CD4-positive, alpha-beta T cell (primary cell): ENCODE measurements at regions of chr2 and their contacts with region 1.

Region 1: DNA sequence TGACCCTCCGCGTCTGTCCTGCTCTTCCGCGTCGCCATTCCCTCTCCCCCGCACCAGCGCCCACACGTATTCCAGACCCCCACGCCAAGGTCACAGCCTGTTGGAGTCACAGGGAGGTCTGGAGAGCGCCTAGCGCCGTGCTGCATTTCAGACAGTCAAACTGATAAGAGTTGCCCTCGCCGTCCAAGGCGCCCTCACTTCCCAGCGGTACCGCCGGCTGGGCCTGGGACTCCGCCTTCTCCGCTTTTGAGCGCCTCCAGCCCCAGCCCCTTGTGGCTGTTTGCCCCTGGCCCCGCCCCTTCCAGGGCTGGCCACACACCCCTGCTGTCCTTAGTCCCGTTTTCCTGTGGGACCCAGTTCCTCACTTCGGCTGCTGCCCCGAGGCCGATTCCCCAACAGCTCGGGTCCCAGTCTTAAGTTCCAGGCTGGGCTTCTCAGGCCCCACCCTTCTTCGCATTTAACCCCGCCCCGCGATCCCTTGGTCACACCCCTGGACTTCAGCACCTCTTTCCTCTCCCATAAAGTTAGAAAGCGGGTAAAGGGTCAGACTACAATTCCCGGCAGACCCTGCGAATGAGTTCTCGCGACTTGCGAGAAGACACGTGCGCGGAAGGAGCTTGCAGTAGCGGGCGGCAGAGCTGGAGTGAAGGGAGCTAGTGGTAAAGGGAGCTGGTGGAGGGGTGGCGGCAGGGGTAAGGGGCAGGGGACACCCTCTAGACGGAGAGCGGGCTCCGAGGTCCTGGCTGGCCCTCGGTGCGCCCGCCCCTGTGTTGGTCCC is at the start of gene GMPPA:
- DNase-seq: peak; percentile 82 to 97 (median 88)
- ATAC-seq: peak; percentile 94
- H3K4me3 ChIP-seq: peak within 1 kb of the TSS; percentile 91
- H3K4me3 Mint-ChIP-seq: peak within 1 kb of the TSS; percentile 93
- H3K27ac ChIP-seq: peak within 1 kb of the TSS in 1 of 2 donors; percentile 45
- H3K27ac Mint-ChIP-seq: peak within 1 kb of the TSS; percentile 63
- H3K4me1 ChIP-seq: peaks cover 44% of the 10 kb centered on the region
- H3K4me1 Mint-ChIP-seq: peaks cover 37% of the 10 kb centered on the region
- H3K27me3 ChIP-seq: peaks cover 40 to 43% of the 10 kb centered on the region in 2 experiments
- H3K27me3 Mint-ChIP-seq: peaks cover 49% of the 10 kb centered on the region
- CTCF ChIP-seq: no peak
- total RNA-seq, gene GMPPA: 13.3 to 14.4 TPM

Region 2: DNA sequence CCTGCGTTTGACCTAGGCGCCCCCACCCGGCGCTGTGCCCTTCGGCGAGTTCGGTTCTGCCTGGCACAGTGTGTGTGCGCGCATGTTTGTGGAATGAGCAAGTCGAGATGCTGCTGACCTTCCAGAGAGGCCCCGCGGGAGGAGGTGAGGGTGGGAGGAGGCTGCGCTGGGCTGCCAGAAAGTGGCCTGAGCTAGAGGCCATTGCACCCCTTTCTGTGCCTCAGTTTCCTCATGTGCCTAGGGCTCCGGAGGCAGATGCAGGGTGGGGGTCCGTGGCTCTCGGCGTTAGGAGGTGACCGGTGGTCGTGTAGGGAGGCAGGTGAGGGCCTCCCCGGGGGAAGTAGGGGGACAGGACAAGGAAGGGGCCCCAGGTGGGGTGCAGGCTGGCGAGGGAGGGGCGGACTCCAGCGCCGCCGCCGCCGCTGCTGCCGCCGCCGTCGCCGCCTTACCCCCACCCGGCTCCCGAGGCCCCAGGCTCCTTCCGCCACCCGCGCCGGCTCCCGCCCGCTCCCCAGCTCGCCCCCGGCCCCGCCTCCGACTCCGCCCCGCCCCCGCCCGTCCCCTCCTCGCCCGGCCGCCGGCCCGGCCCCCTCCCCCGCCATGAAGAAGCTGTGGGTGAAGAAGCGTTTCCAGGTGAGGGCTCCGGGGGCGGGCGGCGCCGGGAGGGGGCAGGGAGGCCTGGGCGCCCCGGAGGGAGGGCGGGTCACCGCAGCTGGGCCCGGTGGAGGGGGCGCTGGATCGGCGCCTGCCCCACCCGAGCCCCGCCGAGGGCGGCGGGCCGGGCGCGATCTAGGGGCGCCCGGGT is 56.8 kb before region 1 on chr2:
- CTCF ChIA-PET with region 1: no interaction called
- POLR2A ChIA-PET with region 1: interaction called, 3 read pairs
- intact Hi-C with region 1: loop called in 1 of 2 experiments (anchors 5 kb)
- DNase-seq: peak; percentile 34 to 89 (median 61)
- ATAC-seq: peak; percentile 82
- H3K4me3 ChIP-seq: peak overlapping the region; percentile 59
- H3K4me3 Mint-ChIP-seq: peak overlapping the region; percentile 81
- H3K27ac ChIP-seq: no peak overlapping the region
- H3K27ac Mint-ChIP-seq: no peak overlapping the region
- H3K4me1 ChIP-seq: peaks cover 12% of the 10 kb centered on the region
- H3K4me1 Mint-ChIP-seq: peaks cover 22% of the 10 kb centered on the region
- H3K27me3 ChIP-seq: peaks cover 2 to 12% of the 10 kb centered on the region in 2 experiments
- H3K27me3 Mint-ChIP-seq: peaks cover 27% of the 10 kb centered on the region
- CTCF ChIP-seq: no peak

Region 3: DNA sequence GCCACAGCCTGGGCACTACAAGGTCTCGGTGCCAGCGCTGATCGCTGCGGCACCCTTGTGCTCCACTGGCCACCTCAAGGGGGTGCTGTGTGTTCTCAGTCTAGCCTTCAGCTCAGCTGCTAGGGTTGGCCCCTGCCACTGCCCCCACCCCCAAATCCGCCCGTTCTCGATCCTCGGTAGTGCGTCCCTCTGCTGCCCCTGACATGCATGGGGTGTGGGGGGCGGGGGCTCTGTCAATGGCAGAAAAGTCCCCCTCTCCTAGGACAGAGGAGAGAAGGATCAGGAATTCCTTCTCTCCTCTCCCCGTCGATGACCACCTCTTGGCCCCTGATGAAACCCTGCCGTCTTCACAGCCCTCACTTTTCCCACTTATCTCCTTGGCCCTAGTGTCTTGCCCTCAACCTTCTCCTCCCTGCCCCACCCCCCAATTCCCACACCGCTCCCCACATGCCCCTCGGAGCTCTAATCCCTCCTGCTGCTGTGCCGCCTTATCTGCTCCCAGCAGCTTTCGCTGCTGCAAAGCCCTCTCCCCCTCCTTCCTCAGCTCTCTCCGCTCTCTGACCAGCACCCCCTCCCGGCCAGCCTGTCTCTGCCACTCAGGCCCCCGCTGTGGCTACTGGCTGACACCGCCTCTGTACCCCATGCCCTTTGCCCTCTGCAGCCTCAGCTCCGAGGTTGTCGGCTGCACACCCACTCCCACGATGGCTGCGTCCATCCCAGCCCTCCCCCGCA is 11.5 kb after region 1 on chr2:
- CTCF ChIA-PET with region 1: interaction called, 11 read pairs
- POLR2A ChIA-PET with region 1: interaction called, 4 read pairs
- intact Hi-C with region 1: no loop called
- DNase-seq: peak in 13 of 14 experiments; percentile 26 to 73 (median 43)
- ATAC-seq: peak; percentile 94
- H3K4me3 ChIP-seq: no peak overlapping the region
- H3K4me3 Mint-ChIP-seq: peak overlapping the region; percentile 28
- H3K27ac ChIP-seq: no peak overlapping the region
- H3K27ac Mint-ChIP-seq: no peak overlapping the region
- H3K4me1 ChIP-seq: peaks cover 33% of the 10 kb centered on the region
- H3K4me1 Mint-ChIP-seq: peaks cover 25% of the 10 kb centered on the region
- H3K27me3 ChIP-seq: peaks cover 49 to 59% of the 10 kb centered on the region in 2 experiments
- H3K27me3 Mint-ChIP-seq: peaks cover 61% of the 10 kb centered on the region
- CTCF ChIP-seq: peak; percentile 61

Region 4: DNA sequence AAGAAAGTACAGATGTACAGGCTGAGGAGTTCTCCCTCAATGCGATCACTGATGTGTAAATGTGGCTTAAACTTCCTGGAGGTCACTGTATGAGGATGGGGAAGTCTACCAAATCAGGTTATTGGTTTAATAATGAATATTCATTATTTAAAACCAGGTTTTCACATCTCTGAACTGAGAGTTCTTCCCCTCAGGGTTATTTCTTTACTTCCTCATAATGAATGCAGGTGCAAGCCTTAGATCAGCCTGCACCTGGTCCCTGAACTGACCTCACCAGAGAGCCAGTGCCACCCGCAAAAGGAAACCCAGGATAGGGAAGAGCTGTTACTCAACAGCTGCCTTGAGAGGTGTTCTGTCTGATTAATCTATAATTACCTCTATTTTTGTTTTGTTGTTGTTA is 1704.7 kb after region 1 on chr2:
- CTCF ChIA-PET with region 1: no interaction called
- POLR2A ChIA-PET with region 1: no interaction called
- intact Hi-C with region 1: no loop called
- DNase-seq: peak in 2 of 14 experiments; percentile 4 to 11
- ATAC-seq: no peak
- H3K4me3 ChIP-seq: no peak overlapping the region
- H3K4me3 Mint-ChIP-seq: no peak overlapping the region
- H3K27ac ChIP-seq: no peak overlapping the region
- H3K27ac Mint-ChIP-seq: no peak overlapping the region
- H3K4me1 ChIP-seq: no peaks in the 10 kb centered on the region
- H3K4me1 Mint-ChIP-seq: no peaks in the 10 kb centered on the region
- H3K27me3 ChIP-seq: no peaks in the 10 kb centered on the region
- H3K27me3 Mint-ChIP-seq: peaks cover 4% of the 10 kb centered on the region
- CTCF ChIP-seq: no peak